ENCODE measurements at regions of chr14 and their contacts with region 1.

Region 1: GRCh38 chr14:46581036-46581671 is 70.4 kb downstream of the RPL10L start:
- DNase-seq: peak; percentile 20
- H3K4me3 ChIP-seq: no peak overlapping the region
- H3K27ac ChIP-seq: no peak overlapping the region
- H3K4me1 ChIP-seq: no peaks in the 10 kb centered on the region
- H3K27me3 ChIP-seq: no peaks in the 10 kb centered on the region
- CTCF ChIP-seq: peak; percentile 45

Region 2: GRCh38 chr14:46417066-46417465 is 164.1 kb before region 1 on chr14:
- intact Hi-C with region 1: no loop called
- DNase-seq: no peak
- H3K4me3 ChIP-seq: no peak overlapping the region
- H3K27ac ChIP-seq: no peak overlapping the region
- H3K4me1 ChIP-seq: no peaks in the 10 kb centered on the region
- H3K27me3 ChIP-seq: no peaks in the 10 kb centered on the region
- CTCF ChIP-seq: no peak

Region 3: GRCh38 chr14:46451800-46452199 is 129.4 kb before region 1 on chr14:
- intact Hi-C with region 1: no loop called
- DNase-seq: no peak
- H3K4me3 ChIP-seq: no peak overlapping the region
- H3K27ac ChIP-seq: no peak overlapping the region
- H3K4me1 ChIP-seq: no peaks in the 10 kb centered on the region
- H3K27me3 ChIP-seq: no peaks in the 10 kb centered on the region
- CTCF ChIP-seq: no peak

Region 4: DNA sequence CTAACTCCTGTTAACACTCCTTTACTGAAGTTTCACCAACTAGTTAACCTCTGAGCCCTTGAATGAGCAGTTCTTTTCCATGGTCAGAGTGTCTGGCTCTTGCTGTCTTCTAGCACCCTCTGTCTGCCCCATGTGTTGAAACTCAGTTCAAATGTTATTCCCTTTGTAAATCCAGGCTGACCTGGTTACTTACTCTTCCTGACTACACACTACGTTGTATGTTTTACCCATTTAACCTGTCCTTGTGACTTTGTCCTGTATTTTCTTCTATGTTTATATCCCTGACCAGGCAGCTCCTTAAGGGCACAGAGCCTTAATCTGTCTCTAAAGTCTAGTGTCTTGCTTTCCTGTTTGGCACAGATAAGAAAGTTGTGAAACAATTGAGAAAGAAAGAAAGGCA is 459.4 kb after region 1 on chr14:
- intact Hi-C with region 1: loop called (anchors 5 kb)
- DNase-seq: no peak
- H3K4me3 ChIP-seq: no peak overlapping the region
- H3K27ac ChIP-seq: no peak overlapping the region
- H3K4me1 ChIP-seq: no peaks in the 10 kb centered on the region
- H3K27me3 ChIP-seq: no peaks in the 10 kb centered on the region
- CTCF ChIP-seq: no peak